ENCODE measurements at regions of chr3 and their contacts with region 1.

Region 1: DNA sequence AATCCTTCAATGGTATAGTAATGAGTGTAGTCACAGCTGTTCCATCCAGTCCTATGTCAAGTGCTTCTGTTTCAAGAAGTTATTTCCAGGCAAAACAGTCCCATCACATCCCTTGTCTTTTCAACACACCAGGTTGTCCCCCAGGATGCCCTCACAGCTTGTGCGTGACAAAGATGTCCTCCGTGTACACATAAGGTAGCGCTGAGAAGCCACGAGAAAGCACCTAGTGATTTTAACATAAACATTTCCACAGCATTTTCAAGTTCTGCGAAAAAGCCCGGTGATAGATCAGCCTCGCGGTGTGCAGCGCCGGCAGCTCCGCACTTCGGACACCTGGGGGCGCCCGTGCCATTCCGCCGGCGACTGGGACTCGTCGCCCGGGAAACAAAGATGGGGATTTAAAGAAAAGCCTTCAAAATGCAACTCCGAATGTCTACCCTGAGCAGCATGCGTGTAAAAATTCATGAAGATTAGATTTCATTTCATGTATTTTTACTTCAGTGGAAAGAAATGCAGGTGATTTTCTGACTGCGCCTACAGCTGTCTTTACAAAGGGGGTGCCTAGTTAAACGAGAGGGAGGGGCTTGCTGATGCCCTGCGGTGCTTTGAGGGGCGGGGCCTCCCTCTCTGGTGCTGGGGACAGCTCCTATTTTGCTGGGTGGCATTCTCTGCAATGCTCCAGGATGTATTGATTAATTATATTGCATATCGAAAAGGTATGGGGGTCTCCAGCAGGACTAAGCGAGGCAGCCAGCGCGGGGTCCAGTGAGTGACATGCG is 49.9 kb downstream of the KY start:
- DNase-seq: no peak
- H3K4me3 ChIP-seq: peak overlapping the region; percentile 23
- H3K27ac ChIP-seq: no peak overlapping the region
- H3K27me3 ChIP-seq: peaks cover 10% of the 10 kb centered on the region
- CTCF ChIP-seq: peak; percentile 100

Region 2: GRCh38 chr3:134002306-134002705 is 598.6 kb before region 1 on chr3:
- CTCF ChIA-PET with region 1: no interaction called
- POLR2A ChIA-PET with region 1: no interaction called
- DNase-seq: peak; percentile 10
- H3K4me3 ChIP-seq: no peak overlapping the region
- H3K27ac ChIP-seq: no peak overlapping the region
- H3K27me3 ChIP-seq: no peaks in the 10 kb centered on the region
- CTCF ChIP-seq: no peak

Region 3: DNA sequence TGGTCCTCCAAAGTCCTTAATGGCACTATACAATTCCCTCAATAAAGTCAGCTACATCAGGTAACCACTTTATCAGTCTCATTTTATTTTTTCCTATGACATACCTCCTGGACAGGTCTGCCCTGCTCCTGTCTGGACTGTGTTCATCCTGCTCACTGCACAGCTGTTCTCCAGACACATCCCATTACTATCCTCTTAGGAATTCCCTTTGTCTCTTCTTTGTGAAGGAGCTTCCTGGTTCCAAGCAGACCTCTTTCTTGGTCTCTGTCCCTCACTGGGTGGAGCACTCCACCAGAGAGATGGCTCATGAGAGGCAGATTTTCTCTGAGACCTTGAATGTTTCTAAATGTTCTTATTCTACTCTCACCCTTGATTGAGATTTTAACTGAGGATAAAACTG is 10.1 kb before region 1 on chr3:
- CTCF ChIA-PET with region 1: interaction called, 20 read pairs
- POLR2A ChIA-PET with region 1: no interaction called
- DNase-seq: no peak
- H3K4me3 ChIP-seq: no peak overlapping the region
- H3K27ac ChIP-seq: no peak overlapping the region
- H3K27me3 ChIP-seq: peaks cover 14% of the 10 kb centered on the region
- CTCF ChIP-seq: no peak

Region 4: GRCh38 chr3:134613006-134613520 is 12.2 kb after region 1 on chr3:
- CTCF ChIA-PET with region 1: interaction called, 23 read pairs
- POLR2A ChIA-PET with region 1: interaction called, 3 read pairs
- DNase-seq: no peak
- H3K4me3 ChIP-seq: no peak overlapping the region
- H3K27ac ChIP-seq: no peak overlapping the region
- H3K27me3 ChIP-seq: peaks cover 18% of the 10 kb centered on the region
- CTCF ChIP-seq: no peak

Region 5: GRCh38 chr3:134618478-134619300 is 17.8 kb after region 1 on chr3:
- CTCF ChIA-PET with region 1: interaction called, 38 read pairs
- POLR2A ChIA-PET with region 1: interaction called, 3 read pairs
- DNase-seq: no peak
- H3K4me3 ChIP-seq: no peak overlapping the region
- H3K27ac ChIP-seq: no peak overlapping the region
- H3K27me3 ChIP-seq: no peaks in the 10 kb centered on the region
- CTCF ChIP-seq: no peak

Region 6: DNA sequence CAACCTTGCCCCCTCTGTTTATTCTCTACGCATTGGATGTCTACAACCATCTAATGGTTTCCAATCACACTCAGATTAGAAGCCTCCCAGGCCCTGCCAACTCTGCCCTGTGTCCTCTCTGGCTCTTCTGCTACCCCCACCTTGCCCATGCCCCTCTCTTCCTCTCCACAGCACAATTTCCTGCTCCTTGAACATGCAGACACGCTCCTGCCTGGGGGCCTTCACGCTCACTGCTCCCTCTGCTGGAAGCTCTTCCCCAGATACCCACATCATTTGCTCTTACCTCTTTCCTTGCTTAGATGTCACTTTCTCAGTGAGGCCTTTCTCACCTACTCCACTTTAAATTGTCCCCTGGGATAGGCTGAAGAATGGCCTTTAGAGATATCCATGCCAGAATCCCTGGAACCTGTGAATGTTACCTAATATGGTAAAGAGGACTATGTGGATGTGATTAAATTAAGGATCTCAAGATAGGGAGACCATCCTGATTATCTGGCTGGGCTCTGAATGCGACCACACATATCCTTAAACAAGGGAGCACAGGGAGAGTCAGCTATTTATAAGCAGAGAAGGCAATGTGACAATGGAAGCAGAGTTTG is 40.1 kb after region 1 on chr3:
- CTCF ChIA-PET with region 1: interaction called, 124 read pairs
- POLR2A ChIA-PET with region 1: no interaction called
- DNase-seq: no peak
- H3K4me3 ChIP-seq: no peak overlapping the region
- H3K27ac ChIP-seq: no peak overlapping the region
- H3K27me3 ChIP-seq: peaks cover 4% of the 10 kb centered on the region
- CTCF ChIP-seq: peak; percentile 73

Measured in AG04450 (cell line).